ENCODE measurements at regions of chr17 and their contacts with region 1.

Region 1: GRCh38 chr17:64182325-64182972 is 52.5 kb upstream of the ERN1 start:
- DNase-seq: no peak
- H3K4me3 ChIP-seq: no peak overlapping the region
- H3K27ac ChIP-seq: no peak overlapping the region
- H3K4me1 ChIP-seq: no peaks in the 10 kb centered on the region
- H3K27me3 ChIP-seq: no peaks in the 10 kb centered on the region
- CTCF ChIP-seq: no peak

Region 2: GRCh38 chr17:63937334-63937733 is 245.1 kb before region 1 on chr17:
- CTCF ChIA-PET with region 1: interaction called, 11 read pairs
- POLR2A ChIA-PET with region 1: no interaction called
- intact Hi-C with region 1: no loop called
- DNase-seq: no peak
- H3K4me3 ChIP-seq: no peak overlapping the region
- H3K27ac ChIP-seq: no peak overlapping the region
- H3K4me1 ChIP-seq: no peaks in the 10 kb centered on the region
- H3K27me3 ChIP-seq: peaks cover 14% of the 10 kb centered on the region; the same call in 1 of the 2 replicates
- CTCF ChIP-seq: no peak

Measured in PC-9 (cell line).